ENCODE measurements at regions of chr7 and their contacts with region 1.

Region 1: GRCh38 chr7:108402865-108403264 is 53.4 kb downstream of the NRCAM start:
- DNase-seq: no peak
- H3K4me3 ChIP-seq: no peak overlapping the region
- H3K27ac ChIP-seq: no peak overlapping the region
- H3K4me1 ChIP-seq: no peaks in the 10 kb centered on the region
- H3K27me3 ChIP-seq: no peaks in the 10 kb centered on the region; a peak in 1 of 7 replicates
- CTCF ChIP-seq: no peak
- EP300 ChIP-seq: no peak
- POLR2A ChIP-seq: no peak
- RAD21 ChIP-seq: no peak

Region 2: DNA sequence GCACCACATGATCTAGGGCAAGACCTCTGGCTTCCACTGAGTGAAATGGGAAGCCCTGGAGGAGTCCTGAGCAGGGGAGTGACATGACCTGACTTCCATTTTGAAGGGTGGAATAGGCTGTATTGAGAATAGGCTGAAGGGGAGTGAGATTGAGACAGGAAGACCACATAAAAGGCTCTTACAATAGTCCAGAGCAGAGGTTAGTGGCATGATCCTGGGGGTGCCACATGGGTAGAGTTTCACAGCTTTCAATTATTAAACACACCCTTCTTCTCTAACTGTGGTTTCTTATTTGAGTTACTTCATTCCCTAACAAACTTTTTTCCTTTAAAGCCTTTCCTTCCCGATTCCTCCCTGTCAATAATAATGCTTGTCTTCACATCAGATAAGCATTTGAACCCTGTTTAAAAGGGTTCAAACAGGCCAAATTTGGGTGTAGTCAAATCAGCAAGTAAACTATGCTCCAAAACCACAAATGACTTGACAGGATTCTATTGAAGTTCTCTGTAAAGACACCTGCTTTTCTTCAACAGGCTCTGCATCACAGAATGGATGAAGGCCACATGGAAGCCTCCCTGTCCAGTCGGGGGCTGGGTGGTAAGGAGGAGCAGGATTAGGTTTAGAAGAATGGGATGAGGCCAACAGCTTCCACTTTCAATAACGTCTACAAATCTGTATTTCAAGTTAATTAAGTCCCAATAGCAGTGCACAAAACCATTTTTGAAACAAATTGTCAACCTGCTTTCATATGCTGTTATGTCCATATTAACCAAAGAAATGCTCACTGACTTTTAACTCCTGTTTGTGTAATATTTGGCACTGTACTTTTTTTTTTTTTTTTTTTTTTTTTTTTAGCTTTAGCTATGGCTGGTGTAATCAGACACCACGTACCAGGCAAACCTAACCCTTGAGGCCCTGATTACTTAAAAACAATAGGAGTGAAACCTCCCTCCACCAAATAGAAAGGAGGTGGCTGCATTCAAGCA is 78.5 kb before region 1 on chr7:
- CTCF ChIA-PET with region 1: no interaction called
- POLR2A ChIA-PET with region 1: no interaction called
- DNase-seq: no peak
- H3K4me3 ChIP-seq: 0 out of 8 replicates have a peak overlapping the region, but pooled peaks of 1 of the 4 experiments have one; percentile 5
- H3K27ac ChIP-seq: no peak overlapping the region
- H3K4me1 ChIP-seq: peaks cover 0 to 12% (median 6%) of the 10 kb centered on the region in 4 experiments; a peak in 5 of 7 replicates
- H3K27me3 ChIP-seq: no peaks in the 10 kb centered on the region; a peak in 1 of 7 replicates
- CTCF ChIP-seq: no peak
- EP300 ChIP-seq: no peak
- POLR2A ChIP-seq: no peak
- RAD21 ChIP-seq: no peak

Region 3: GRCh38 chr7:108384721-108385481 is 18.0 kb before region 1 on chr7:
- CTCF ChIA-PET with region 1: interaction called, 12 read pairs
- POLR2A ChIA-PET with region 1: no interaction called
- DNase-seq: no peak
- H3K4me3 ChIP-seq: no peak overlapping the region
- H3K27ac ChIP-seq: no peak overlapping the region
- H3K4me1 ChIP-seq: no peaks in the 10 kb centered on the region
- H3K27me3 ChIP-seq: no peaks in the 10 kb centered on the region
- CTCF ChIP-seq: peak in 2 of 3 experiments; percentile 44 to 68; a peak in 3 of 4 replicates
- EP300 ChIP-seq: no peak
- POLR2A ChIP-seq: no peak
- RAD21 ChIP-seq: peak; percentile 53 to 67

Region 4: DNA sequence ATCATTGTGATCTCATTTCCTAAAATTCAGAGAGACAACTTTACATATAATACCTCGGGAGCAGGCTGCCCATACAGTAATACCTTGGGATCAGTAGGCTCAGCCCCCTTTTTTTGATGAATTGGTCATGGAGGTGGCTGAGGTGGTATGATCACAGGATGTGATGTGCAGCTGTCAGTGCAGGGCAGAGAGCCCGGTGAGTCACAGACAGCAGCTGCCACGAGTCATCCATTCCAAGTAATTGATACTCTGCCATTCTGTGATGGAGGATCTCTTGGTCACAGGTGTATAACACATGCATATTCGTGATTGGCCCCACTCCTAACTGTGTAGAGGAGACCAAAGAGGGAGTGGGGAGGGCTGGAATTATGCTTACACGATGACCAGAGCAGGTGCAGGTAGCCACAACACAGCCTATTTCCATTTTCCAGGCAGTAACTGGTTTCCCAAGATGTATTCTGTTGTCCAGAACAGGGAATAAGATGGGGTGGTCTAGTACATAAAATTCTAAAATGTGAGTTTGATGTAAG is 39.2 kb after region 1 on chr7:
- CTCF ChIA-PET with region 1: no interaction called
- POLR2A ChIA-PET with region 1: no interaction called
- DNase-seq: no peak
- H3K4me3 ChIP-seq: no peak overlapping the region
- H3K27ac ChIP-seq: no peak overlapping the region
- H3K4me1 ChIP-seq: no peaks in the 10 kb centered on the region
- H3K27me3 ChIP-seq: no peaks in the 10 kb centered on the region
- CTCF ChIP-seq: no peak
- EP300 ChIP-seq: no peak
- POLR2A ChIP-seq: no peak
- RAD21 ChIP-seq: no peak